Endothelial cell of umbilical vein (primary cell): ENCODE measurements at regions of chr12 and their contacts with region 1.

Region 1: GRCh38 chr12:98490501-98491453 is 24.6 kb upstream of the TMPO start:
- DNase-seq: peak; percentile 96
- H3K4me3 ChIP-seq: no peak overlapping the region
- H3K27ac ChIP-seq: peak overlapping the region; percentile 45
- H3K4me1 ChIP-seq: peaks cover 4% of the 10 kb centered on the region
- H3K27me3 ChIP-seq: no peaks in the 10 kb centered on the region
- CTCF ChIP-seq: peak; percentile 83 to 89
- POLR2A ChIP-seq: no peak

Region 2: DNA sequence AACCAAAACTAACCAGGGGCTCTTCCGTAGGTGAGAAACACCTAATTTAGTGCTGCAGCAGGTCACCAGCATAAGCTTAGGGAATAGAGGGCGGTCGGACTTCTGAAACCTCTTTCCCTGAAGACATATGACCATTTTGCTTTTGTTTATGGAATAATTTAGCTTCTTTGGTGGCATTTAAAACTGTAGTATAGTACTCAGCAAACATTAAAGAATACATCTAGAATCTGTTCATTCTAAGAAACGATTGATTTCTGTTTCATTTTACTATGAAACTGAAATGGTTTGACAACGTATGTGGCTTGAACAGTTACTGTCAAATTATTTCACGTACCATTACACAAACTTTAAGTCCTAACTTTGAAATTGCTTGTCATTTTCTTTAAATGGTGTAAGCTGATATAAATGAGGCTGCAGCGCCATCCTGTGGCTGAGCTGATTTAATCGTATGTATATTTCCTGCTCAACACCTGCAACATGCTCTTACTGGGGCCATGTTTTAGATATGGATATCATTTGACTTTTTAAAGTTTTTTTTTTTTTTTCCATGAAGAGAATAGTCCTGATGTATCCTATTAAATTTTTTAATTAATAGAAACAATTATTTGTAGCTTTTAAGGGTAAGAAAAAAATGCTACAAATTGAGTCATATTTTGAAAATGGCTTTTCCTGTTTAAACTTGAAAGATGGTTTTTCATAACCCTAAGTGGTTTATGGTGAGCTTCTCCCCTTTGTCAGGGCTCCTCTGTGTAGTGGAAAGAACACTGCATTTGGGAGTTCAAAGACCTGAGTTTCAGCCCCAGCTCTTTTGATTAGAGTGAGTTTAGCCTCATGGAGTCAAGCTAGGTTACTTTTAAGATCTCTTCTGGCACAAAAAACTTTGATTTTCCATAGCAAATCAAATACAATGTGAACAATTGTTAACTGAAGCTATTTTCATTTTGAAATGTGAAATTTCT is 1974.0 kb before region 1 on chr12:
- CTCF ChIA-PET with region 1: no interaction called
- POLR2A ChIA-PET with region 1: no interaction called
- dilution Hi-C with region 1: no loop called
- intact Hi-C with region 1: no loop called
- DNase-seq: peak; percentile 94
- H3K4me3 ChIP-seq: no peak overlapping the region
- H3K27ac ChIP-seq: peak overlapping the region; percentile 69
- H3K4me1 ChIP-seq: peaks cover 16% of the 10 kb centered on the region
- H3K27me3 ChIP-seq: no peaks in the 10 kb centered on the region
- CTCF ChIP-seq: peak; percentile 29 to 35
- POLR2A ChIP-seq: no peak

Region 3: DNA sequence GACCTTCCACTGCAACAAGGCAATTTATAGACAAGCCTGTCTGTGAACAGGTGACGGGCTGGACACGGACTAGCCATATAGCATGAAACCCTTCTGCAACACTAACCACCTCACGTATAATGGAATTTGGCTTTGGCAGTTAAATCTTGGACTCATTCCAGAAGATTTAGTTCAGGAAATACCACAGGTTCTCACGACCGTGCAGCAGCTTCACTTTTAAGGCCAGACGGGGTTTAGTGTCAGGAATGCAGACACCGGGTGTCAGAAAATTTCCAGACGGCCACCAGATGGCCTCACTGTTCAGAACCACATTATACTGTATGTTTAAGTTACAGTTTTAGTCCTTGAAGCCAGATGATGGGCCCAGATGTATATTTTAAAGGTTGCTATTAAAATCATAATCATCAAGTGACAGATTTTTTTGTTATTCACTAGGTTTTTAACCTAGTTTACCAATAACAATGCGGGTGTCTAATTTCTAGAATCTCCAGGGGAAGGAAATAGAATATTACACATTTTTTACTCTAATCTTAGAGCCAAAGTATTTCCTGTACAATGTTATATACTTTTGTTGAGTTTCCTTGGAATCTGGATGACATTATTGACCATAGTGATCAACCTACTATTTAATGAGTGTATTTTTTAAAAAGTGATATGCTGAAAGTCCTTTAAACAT is 65.9 kb before region 1 on chr12:
- CTCF ChIA-PET with region 1: interaction called, 25 read pairs
- POLR2A ChIA-PET with region 1: no interaction called
- dilution Hi-C with region 1: no loop called
- intact Hi-C with region 1: loop called (anchors 1 kb)
- DNase-seq: peak; percentile 94
- H3K4me3 ChIP-seq: peak overlapping the region in 1 of 3 experiments; percentile 14
- H3K27ac ChIP-seq: peak overlapping the region; percentile 54
- H3K4me1 ChIP-seq: peaks cover 15% of the 10 kb centered on the region
- H3K27me3 ChIP-seq: no peaks in the 10 kb centered on the region
- CTCF ChIP-seq: peak; percentile 65 to 68
- POLR2A ChIP-seq: no peak

Region 4: DNA sequence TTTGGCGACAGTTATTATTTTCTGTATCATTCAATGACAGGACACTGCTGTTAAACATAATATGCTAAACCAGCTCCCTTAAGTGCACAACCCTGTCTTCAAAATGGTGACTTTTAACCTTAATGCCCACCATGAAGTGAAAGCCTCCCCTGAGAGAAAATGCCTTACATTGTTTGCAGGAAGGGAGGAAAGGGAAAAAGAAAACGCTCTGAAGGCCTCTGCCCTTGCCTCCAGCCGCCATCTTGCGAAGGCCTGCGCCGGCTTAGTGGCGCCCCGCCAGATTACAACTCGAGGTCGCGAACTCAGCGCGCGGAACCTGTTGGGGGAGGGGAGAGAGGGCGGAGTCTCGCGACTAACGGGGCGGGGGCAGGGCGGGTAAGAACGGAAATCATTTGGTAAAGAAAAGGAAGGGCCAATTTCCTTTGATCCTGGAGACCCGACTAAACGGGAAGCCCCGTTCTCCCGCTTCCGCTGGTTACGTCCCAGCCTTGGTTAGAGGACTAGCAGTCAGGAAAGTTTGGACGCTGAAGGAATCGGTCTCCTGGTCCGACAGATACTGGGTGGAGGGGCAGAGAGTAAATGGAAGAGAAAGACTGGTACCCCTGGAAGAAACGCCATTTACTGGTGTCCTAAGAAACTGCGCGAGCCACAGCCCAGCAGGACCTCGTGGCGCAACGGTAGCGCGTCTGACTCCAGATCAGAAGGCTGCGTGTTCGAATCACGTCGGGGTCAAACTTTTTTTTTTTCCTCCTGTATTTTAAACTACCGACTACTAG is 13.0 kb after region 1 on chr12:
- CTCF ChIA-PET with region 1: interaction called, 13 read pairs
- POLR2A ChIA-PET with region 1: no interaction called
- dilution Hi-C with region 1: no loop called
- intact Hi-C with region 1: loop called (anchors 1 kb)
- DNase-seq: peak; percentile 95
- H3K4me3 ChIP-seq: peak overlapping the region in 2 of 3 experiments; percentile 50 to 83
- H3K27ac ChIP-seq: peak overlapping the region; percentile 93
- H3K4me1 ChIP-seq: peaks cover 2% of the 10 kb centered on the region
- H3K27me3 ChIP-seq: no peaks in the 10 kb centered on the region
- CTCF ChIP-seq: no peak
- POLR2A ChIP-seq: peak; percentile 45

Region 5: GRCh38 chr12:98532681-98533304 is 42.0 kb after region 1 on chr12:
- CTCF ChIA-PET with region 1: interaction called, 20 read pairs
- POLR2A ChIA-PET with region 1: no interaction called
- dilution Hi-C with region 1: no loop called
- intact Hi-C with region 1: loop called (anchors 1 kb)
- DNase-seq: peak; percentile 51
- H3K4me3 ChIP-seq: no peak overlapping the region
- H3K27ac ChIP-seq: no peak overlapping the region
- H3K4me1 ChIP-seq: no peaks in the 10 kb centered on the region
- H3K27me3 ChIP-seq: no peaks in the 10 kb centered on the region
- CTCF ChIP-seq: peak; percentile 42 to 43
- POLR2A ChIP-seq: no peak

Region 6: GRCh38 chr12:98653866-98654493 is 163.2 kb after region 1 on chr12:
- CTCF ChIA-PET with region 1: interaction called, 4 read pairs
- POLR2A ChIA-PET with region 1: no interaction called
- dilution Hi-C with region 1: no loop called
- intact Hi-C with region 1: loop called (anchors 1 kb)
- DNase-seq: peak; percentile 66
- H3K4me3 ChIP-seq: no peak overlapping the region
- H3K27ac ChIP-seq: no peak overlapping the region
- H3K4me1 ChIP-seq: peaks cover 4% of the 10 kb centered on the region
- H3K27me3 ChIP-seq: no peaks in the 10 kb centered on the region
- CTCF ChIP-seq: peak; percentile 30 to 36
- POLR2A ChIP-seq: no peak